A673 (cell line): ENCODE measurements at regions of chr17 and their contacts with region 1.

Region 1: DNA sequence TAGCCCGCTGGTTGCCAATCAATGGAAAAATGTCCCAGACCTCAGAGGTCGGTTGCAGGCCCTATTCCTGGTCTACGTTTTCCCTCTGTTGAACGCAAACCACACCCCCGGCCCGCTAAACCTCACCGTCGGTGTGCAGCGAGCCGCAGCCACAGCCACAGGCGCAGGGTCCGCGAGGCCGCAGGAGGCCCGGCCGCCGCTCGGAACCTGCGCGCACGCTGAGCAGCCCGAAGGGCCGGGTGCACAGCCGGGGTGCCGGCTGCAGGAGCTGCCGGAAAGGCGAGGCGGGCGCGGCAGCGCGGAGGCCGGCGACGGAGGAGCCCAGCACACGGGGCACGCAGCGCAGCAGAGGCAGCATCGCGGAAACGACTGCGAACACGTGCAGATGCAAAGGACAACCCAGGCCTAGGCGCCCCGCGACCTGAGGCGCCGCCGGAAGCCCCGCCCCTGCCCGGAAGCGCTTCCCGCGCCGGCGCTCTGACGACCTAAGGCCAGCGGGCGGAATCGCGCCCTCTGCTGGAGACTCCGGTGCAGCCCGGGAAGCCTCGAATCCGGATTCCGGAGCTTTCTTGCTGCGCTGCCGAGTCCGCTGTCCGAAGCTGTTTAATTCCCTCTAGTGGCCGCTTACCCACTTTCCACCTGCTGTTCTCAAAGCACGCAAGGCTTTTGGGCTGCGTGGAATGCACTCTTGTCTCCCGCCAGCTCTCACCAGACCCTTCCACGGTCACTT is at the start of gene C1QBP:
- DNase-seq: peak; percentile 94
- H3K4me3 ChIP-seq: peak within 1 kb of the TSS; percentile 96
- H3K27ac ChIP-seq: peak within 1 kb of the TSS; percentile 86
- H3K4me1 ChIP-seq: peaks cover 21% of the 10 kb centered on the region
- H3K27me3 ChIP-seq: no peaks in the 10 kb centered on the region
- CTCF ChIP-seq: peak; percentile 98
- total RNA-seq, gene C1QBP: 457 and 458 TPM in 2 replicates

Region 2: GRCh38 chr17:5249615-5250014 is 189.3 kb before region 1 on chr17:
- CTCF ChIA-PET with region 1: interaction called, 3 read pairs
- POLR2A ChIA-PET with region 1: no interaction called
- intact Hi-C with region 1: loop called (anchors 10 kb)
- DNase-seq: peak; percentile 89
- H3K4me3 ChIP-seq: no peak overlapping the region
- H3K27ac ChIP-seq: no peak overlapping the region
- H3K4me1 ChIP-seq: no peaks in the 10 kb centered on the region
- H3K27me3 ChIP-seq: no peaks in the 10 kb centered on the region
- CTCF ChIP-seq: peak; percentile 69

Region 3: DNA sequence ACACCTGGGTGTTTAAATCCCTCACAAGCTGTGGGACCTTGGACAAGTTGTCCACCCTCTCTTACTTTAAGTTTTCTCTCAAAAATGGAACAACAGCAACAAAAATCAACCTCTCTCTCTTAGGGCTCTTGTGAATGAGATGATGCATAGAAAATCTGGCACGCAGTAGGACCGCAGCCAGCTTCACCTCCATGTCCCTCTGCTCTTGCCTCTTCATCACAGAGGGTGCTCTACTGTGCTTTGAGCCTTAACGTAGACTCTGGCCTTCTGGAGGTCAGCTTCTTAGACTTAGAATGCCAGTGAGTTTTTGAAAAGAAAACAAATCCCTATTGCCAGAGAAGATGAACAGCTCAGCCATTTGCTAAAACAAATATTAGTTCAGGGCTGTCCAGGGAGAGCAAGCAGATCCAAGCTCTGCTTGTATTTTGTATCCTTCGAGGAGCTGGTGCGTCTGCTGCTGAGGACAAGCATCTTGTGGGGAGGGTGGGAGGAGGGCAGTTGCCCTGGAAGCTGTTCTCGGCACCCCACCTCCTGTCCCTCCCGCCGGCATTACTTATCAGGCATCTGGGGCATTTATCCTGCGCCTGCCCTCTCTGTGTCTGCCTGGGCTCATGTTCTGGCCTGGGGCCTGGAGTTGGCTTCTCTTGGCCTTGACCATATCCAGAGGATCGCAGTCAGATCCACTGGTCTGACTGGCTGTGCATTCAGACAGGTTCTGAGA is 318.4 kb after region 1 on chr17:
- CTCF ChIA-PET with region 1: no interaction called
- POLR2A ChIA-PET with region 1: no interaction called
- intact Hi-C with region 1: no loop called
- DNase-seq: no peak
- H3K4me3 ChIP-seq: no peak overlapping the region
- H3K27ac ChIP-seq: no peak overlapping the region
- H3K4me1 ChIP-seq: no peaks in the 10 kb centered on the region
- H3K27me3 ChIP-seq: peaks cover 20% of the 10 kb centered on the region
- CTCF ChIP-seq: no peak